ENCODE measurements at regions of chr12 and their contacts with region 1.

Region 1: DNA sequence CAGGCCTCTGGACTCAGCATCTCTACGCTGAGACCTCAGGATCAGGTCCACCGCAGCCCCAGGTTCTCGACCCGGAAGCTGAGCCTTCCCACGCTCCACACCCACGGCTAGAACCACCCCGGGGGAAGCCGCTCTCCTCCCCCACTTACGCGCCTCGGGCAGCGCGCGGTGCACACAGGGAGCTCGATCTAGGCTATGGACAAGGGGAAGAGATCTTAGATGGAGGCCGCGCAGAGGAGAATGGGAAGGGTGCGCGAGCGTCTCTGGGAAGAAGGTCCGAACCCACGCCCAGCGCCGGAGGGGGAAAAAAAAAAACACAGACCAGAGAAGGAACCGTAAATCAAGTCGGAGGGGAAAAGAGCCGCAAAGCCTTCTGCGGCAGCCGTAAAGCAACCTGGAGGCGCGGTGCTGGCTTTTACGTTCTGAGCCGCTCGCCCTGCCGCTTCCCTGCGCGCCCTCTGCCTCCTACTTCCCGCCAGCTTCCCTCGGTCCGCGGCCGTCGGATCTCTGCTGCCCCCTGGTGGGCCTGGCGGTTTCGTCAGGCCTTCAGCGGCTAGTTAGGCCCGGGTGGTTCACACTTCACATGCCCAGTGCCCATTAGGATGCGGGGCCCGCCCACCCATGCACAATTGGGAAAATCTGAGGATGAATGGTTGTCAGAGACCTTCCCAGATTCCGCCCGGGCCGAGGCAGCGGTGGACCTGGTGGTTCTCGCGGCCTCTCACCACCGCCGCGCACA is at the start of gene RAD52:
- DNase-seq: peak; percentile 96 to 97 (median 96)
- H3K4me3 ChIP-seq: peak within 1 kb of the TSS; percentile 70 to 98
- H3K4me3 Mint-ChIP-seq: peak within 1 kb of the TSS; percentile 92 to 97 (median 95)
- H3K27ac ChIP-seq: peak within 1 kb of the TSS; percentile 75
- H3K27ac Mint-ChIP-seq: peak within 1 kb of the TSS; percentile 93 to 96 (median 94)
- H3K4me1 ChIP-seq: peaks cover 22% of the 10 kb centered on the region
- H3K4me1 Mint-ChIP-seq: peaks cover 18 to 41% (median 28%) of the 10 kb centered on the region in 4 donors
- H3K27me3 ChIP-seq: no peaks in the 10 kb centered on the region
- H3K27me3 Mint-ChIP-seq: no peaks in the 10 kb centered on the region
- total RNA-seq, gene RAD52: 30.7 to 31.5 TPM

Region 2: GRCh38 chr12:569803-570434 is 379.7 kb before region 1 on chr12:
- CTCF ChIA-PET with region 1: interaction called, 26 read pairs
- POLR2A ChIA-PET with region 1: interaction called, 7 read pairs
- intact Hi-C with region 1: loop called (anchors 1 kb)
- DNase-seq: peak; percentile 79 to 84 (median 82)
- H3K4me3 ChIP-seq: peak overlapping the region; percentile 52 to 65
- H3K4me3 Mint-ChIP-seq: peak overlapping the region; percentile 78 to 90 (median 86)
- H3K27ac ChIP-seq: peak overlapping the region; percentile 47
- H3K27ac Mint-ChIP-seq: peak overlapping the region in 6 of 7 donors; percentile 64 to 88 (median 80)
- H3K4me1 ChIP-seq: peaks cover 43% of the 10 kb centered on the region
- H3K4me1 Mint-ChIP-seq: peaks cover 35 to 54% (median 42%) of the 10 kb centered on the region in 4 donors
- H3K27me3 ChIP-seq: no peaks in the 10 kb centered on the region
- H3K27me3 Mint-ChIP-seq: no peaks in the 10 kb centered on the region

Region 3: DNA sequence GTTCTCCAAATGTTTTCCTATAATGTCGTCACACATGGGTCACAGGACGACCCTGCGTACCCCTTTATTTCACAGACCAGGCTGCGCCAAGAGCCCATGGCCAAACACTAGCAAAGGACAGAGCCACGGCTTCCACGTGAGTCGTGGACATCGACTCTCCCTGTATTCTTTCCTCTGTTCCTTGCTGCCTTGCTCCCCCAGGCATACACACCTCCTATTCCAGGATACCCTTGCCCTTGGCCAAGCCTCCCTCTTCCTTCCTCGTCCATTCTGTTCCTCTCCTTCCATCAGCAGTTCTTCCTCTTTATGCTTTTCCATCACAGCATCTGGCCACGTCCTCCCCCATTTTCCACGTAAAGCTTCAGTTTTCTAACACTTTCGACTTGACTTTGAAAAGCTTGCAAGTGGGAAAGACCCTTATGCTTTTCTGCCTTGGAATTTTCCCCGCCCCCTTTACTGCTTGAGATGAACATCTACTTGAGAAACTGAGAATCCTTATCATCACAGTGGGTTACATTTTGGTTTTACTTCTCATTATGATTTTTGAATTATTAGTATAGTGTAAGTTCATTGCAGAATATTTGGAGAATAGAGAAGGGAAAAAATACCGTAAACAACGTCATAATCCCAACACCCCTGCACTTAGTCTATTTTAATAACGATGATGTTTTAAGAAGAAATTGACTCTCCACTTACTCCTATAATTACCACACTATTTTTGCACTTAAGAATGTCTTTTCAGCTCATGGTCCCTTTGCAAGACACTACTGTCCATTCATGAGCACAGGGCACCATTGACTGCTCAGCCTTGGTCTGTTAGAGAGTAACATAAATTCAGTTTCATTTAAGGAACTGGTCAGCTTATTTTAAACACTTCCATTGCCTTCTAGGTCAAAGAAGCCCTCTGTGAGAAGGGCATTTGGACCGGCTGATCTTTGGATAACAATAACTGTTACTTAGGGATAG is 270.6 kb before region 1 on chr12:
- CTCF ChIA-PET with region 1: no interaction called
- POLR2A ChIA-PET with region 1: no interaction called
- intact Hi-C with region 1: no loop called
- DNase-seq: no peak
- H3K4me3 ChIP-seq: no peak overlapping the region
- H3K4me3 Mint-ChIP-seq: peak overlapping the region in 4 of 8 donors; percentile 6 to 52 (median 28)
- H3K27ac ChIP-seq: no peak overlapping the region
- H3K27ac Mint-ChIP-seq: peak overlapping the region in 5 of 7 donors; percentile 14 to 82 (median 72)
- H3K4me1 ChIP-seq: peaks cover 33% of the 10 kb centered on the region
- H3K4me1 Mint-ChIP-seq: peaks cover 20 to 51% (median 36%) of the 10 kb centered on the region in 4 donors
- H3K27me3 ChIP-seq: no peaks in the 10 kb centered on the region
- H3K27me3 Mint-ChIP-seq: no peaks in the 10 kb centered on the region

Region 4: GRCh38 chr12:817941-818600 is 131.6 kb before region 1 on chr12:
- CTCF ChIA-PET with region 1: interaction called, 24 read pairs
- POLR2A ChIA-PET with region 1: interaction called, 6 read pairs
- intact Hi-C with region 1: loop called (anchors 1 kb)
- DNase-seq: no peak
- H3K4me3 ChIP-seq: no peak overlapping the region
- H3K4me3 Mint-ChIP-seq: no peak overlapping the region
- H3K27ac ChIP-seq: no peak overlapping the region
- H3K27ac Mint-ChIP-seq: peak overlapping the region in 1 of 7 donors; percentile 4
- H3K4me1 ChIP-seq: peaks cover 49% of the 10 kb centered on the region
- H3K4me1 Mint-ChIP-seq: peaks cover 36 to 67% (median 55%) of the 10 kb centered on the region in 4 donors
- H3K27me3 ChIP-seq: no peaks in the 10 kb centered on the region
- H3K27me3 Mint-ChIP-seq: no peaks in the 10 kb centered on the region

Region 5: DNA sequence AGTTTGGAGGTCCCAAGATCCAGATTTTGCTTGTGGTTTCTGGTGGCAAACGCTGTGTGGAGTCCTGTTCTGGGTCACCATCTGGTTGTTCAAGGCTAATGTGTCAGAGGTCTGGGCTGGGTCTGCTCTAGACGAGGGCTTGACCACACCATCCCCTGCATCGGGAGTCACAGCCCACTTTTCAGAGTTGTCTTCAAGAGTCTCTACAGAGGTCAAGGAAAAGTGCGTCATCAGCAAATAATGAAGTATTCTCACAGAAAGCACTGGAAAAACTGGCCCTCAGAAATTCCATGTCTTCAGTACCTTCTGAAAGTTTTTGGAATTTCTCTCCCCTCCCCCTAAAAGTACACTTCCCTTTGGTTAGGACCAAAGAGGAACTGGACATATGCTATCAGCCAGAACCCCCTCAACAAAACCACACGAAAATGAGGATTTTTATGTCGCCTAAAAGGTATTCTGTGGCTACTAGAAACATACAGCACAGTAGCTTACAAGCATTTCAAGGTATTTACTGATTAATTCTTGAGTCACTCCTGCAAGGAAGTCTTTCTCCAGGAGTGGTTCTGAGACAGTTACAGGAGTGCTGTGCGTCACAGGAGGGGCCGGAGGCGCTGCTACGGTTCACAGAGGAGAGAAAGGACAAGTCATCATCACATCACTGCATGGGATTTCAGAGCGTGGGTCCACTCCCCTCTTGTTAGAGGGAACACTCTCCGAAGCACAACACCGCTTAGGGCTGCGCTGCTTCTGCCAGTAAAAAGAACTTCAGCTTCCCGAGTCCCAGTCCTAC is 35.5 kb before region 1 on chr12:
- CTCF ChIA-PET with region 1: interaction called, 8 read pairs
- POLR2A ChIA-PET with region 1: interaction called, 3 read pairs
- intact Hi-C with region 1: loop called (anchors 5 kb)
- DNase-seq: no peak
- H3K4me3 ChIP-seq: no peak overlapping the region
- H3K4me3 Mint-ChIP-seq: no peak overlapping the region
- H3K27ac ChIP-seq: no peak overlapping the region
- H3K27ac Mint-ChIP-seq: peak overlapping the region in 6 of 7 donors; percentile 3 to 68 (median 36)
- H3K4me1 ChIP-seq: peaks cover 7% of the 10 kb centered on the region
- H3K4me1 Mint-ChIP-seq: peaks cover 8 to 28% (median 12%) of the 10 kb centered on the region in 4 donors
- H3K27me3 ChIP-seq: no peaks in the 10 kb centered on the region
- H3K27me3 Mint-ChIP-seq: no peaks in the 10 kb centered on the region

Region 6: DNA sequence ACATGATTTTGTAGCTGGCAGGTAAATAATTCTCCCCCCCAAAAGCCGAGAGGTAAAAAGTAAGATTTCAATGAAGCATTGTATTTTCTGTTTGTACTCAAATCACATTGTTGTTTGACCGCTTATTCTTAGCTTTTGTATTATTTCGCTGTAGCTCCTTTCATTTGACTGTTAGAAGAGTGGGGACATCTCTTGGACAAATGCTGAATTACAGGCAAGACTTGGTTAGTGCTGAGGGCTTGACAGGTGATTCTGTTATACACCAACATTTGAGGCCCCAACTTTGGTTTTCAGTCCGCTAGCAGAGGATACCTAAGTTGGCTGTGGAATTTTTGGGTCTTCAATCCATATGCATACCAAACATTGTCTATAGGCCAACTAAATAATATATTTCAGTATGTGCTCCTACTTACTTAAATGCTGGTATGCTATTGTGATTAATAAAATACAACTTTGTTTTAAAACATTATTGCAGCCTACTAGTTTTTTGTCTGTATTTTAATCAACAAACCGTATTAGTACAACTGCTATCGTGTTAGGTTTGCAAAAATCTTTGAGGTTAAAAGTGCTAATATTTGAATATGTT is 143.6 kb after region 1 on chr12:
- CTCF ChIA-PET with region 1: interaction called, 7 read pairs
- POLR2A ChIA-PET with region 1: interaction called, 3 read pairs
- intact Hi-C with region 1: loop called (anchors 5 kb)
- DNase-seq: peak; percentile 38 to 52 (median 44)
- H3K4me3 ChIP-seq: no peak overlapping the region
- H3K4me3 Mint-ChIP-seq: no peak overlapping the region
- H3K27ac ChIP-seq: no peak overlapping the region
- H3K27ac Mint-ChIP-seq: no peak overlapping the region
- H3K4me1 ChIP-seq: no peaks in the 10 kb centered on the region
- H3K4me1 Mint-ChIP-seq: peaks cover 1 to 15% (median 8%) of the 10 kb centered on the region in 4 donors
- H3K27me3 ChIP-seq: no peaks in the 10 kb centered on the region
- H3K27me3 Mint-ChIP-seq: no peaks in the 10 kb centered on the region

Region 7: GRCh38 chr12:1138691-1139090 is 189.1 kb after region 1 on chr12:
- CTCF ChIA-PET with region 1: no interaction called
- POLR2A ChIA-PET with region 1: no interaction called
- intact Hi-C with region 1: no loop called
- DNase-seq: no peak
- H3K4me3 ChIP-seq: no peak overlapping the region
- H3K4me3 Mint-ChIP-seq: no peak overlapping the region
- H3K27ac ChIP-seq: no peak overlapping the region
- H3K27ac Mint-ChIP-seq: peak overlapping the region in 1 of 7 donors; percentile 64
- H3K4me1 ChIP-seq: no peaks in the 10 kb centered on the region
- H3K4me1 Mint-ChIP-seq: peaks cover 0 to 3% (median 1%) of the 10 kb centered on the region in 4 donors
- H3K27me3 ChIP-seq: no peaks in the 10 kb centered on the region
- H3K27me3 Mint-ChIP-seq: no peaks in the 10 kb centered on the region